ENCODE measurements at regions of chr2 and their contacts with region 1.

Region 1: GRCh38 chr2:120680136-120680761 is 55.4 kb upstream of the GLI2 start:
- DNase-seq: peak; percentile 89
- ATAC-seq: peak; percentile 79
- H3K4me3 Mint-ChIP-seq: no peak overlapping the region
- H3K27ac Mint-ChIP-seq: no peak overlapping the region
- H3K4me1 Mint-ChIP-seq: no peaks in the 10 kb centered on the region
- H3K27me3 Mint-ChIP-seq: peaks cover 19% of the 10 kb centered on the region
- CTCF ChIP-seq: no peak

Region 2: DNA sequence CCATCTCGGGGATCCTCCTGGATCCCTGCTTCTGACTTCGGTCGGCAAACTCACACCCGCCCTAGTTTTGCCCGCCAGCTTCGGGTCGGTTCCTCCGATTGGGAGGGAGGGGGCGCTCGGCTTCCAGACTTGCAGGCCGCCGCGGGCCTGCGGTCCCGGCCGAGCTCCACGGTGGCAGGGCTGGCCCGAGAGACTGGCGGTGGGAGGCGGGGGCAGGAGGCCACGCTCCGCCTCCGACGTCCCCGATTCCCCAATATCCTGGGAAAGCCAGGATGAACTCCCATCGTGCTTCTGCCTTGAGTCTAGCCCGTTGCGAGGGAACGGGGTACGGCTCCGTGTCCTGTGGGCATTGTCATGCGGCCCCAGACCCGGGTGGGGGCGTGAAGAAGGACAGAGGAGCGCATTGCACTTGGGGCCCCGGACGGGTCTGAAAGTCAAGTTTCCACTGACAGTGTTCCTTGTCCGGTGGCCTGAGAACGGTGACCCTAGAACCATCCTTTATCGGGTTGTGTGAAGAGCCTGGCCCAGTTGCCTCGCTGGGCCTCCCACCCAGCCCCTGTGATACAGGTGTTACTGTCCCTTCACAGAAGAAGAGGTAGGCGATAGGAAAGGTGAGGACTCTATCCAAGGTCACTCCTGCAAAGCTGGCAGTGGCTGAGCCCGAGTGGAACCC is 336.7 kb before region 1 on chr2:
- CTCF ChIA-PET with region 1: interaction called, 13 read pairs
- POLR2A ChIA-PET with region 1: no interaction called
- intact Hi-C with region 1: loop called (anchors 5 kb)
- DNase-seq: peak; percentile 74
- ATAC-seq: peak; percentile 76
- H3K4me3 Mint-ChIP-seq: no peak overlapping the region
- H3K27ac Mint-ChIP-seq: no peak overlapping the region
- H3K4me1 Mint-ChIP-seq: peaks cover 16% of the 10 kb centered on the region
- H3K27me3 Mint-ChIP-seq: peaks cover 52% of the 10 kb centered on the region
- CTCF ChIP-seq: peak; percentile 75

Region 3: DNA sequence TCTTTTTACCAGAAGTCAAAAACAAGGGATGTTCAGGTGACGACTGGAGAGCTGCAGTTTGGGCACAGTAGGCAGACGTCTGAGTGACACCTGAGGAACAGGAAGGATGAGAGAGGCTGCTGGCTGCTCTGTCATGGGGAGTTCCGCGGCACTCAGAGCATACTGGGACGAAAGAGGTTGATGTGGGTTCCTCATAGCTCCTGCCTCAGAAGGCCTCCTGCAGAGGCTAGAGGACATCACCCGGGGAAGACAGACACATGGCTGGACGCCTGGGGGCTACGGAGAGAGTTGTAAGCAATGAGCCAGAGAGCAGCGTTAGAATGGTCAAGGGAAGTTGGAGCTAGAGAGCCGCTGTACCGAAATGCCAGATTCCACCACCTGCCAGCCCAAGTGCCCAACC is 10.3 kb after region 1 on chr2:
- CTCF ChIA-PET with region 1: interaction called, 11 read pairs
- POLR2A ChIA-PET with region 1: no interaction called
- intact Hi-C with region 1: no loop called
- DNase-seq: no peak
- ATAC-seq: no peak
- H3K4me3 Mint-ChIP-seq: no peak overlapping the region
- H3K27ac Mint-ChIP-seq: no peak overlapping the region
- H3K4me1 Mint-ChIP-seq: peaks cover 2% of the 10 kb centered on the region
- H3K27me3 Mint-ChIP-seq: peaks cover 18% of the 10 kb centered on the region
- CTCF ChIP-seq: no peak

Region 4: GRCh38 chr2:120738786-120739730 is 58.8 kb after region 1 on chr2:
- CTCF ChIA-PET with region 1: no interaction called
- POLR2A ChIA-PET with region 1: no interaction called
- intact Hi-C with region 1: no loop called
- DNase-seq: no peak
- ATAC-seq: no peak
- H3K4me3 Mint-ChIP-seq: no peak overlapping the region
- H3K27ac Mint-ChIP-seq: no peak overlapping the region
- H3K4me1 Mint-ChIP-seq: no peaks in the 10 kb centered on the region
- H3K27me3 Mint-ChIP-seq: peaks cover 65% of the 10 kb centered on the region
- CTCF ChIP-seq: no peak

Region 5: GRCh38 chr2:121699421-121700333 is 1019.4 kb after region 1 on chr2:
- CTCF ChIA-PET with region 1: no interaction called
- POLR2A ChIA-PET with region 1: no interaction called
- intact Hi-C with region 1: no loop called
- DNase-seq: peak; percentile 97
- ATAC-seq: peak; percentile 97
- H3K4me3 Mint-ChIP-seq: peak overlapping the region; percentile 71
- H3K27ac Mint-ChIP-seq: peak overlapping the region; percentile 93
- H3K4me1 Mint-ChIP-seq: peaks cover 42% of the 10 kb centered on the region
- H3K27me3 Mint-ChIP-seq: no peaks in the 10 kb centered on the region
- CTCF ChIP-seq: no peak

Measured in activated CD8-positive, alpha-beta T cell treated with anti-CD3 and anti-CD28 coated beads for 36 hours (primary cell).